AG04449 (cell line): ENCODE measurements at regions of chr3 and their contacts with region 1.

Region 1: DNA sequence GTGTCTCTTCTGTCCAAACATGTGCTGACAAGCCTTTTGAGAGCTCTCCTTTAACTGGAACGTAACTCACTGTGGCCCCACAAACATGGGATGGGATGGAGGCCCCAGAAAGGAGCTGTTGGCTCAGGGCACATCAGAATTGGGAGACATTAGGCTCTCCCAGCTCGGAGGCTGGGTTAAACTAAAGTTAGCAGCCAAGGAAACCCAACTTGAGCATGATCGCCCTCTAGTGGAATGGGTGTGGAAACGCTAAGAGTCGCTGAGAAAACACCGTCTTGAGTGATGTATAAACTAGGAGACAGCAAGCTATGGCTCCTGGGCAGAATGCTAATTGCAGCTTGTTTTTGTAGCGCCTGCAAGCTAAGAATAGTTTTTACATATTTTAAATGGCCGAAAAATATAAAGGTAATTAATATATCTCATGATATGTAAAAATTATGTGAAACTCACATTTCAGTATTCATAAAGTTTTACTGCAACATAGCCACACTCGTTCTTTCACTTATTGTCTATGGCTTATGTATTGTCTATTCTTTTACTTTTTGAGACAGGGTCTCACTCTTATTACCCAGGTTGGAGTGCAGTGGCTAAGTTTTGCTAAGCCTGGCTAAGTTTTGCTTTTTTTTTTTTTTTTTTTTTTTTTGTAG is 138.8 kb upstream of the HACD2 start:
- DNase-seq: no peak
- H3K4me3 ChIP-seq: no peak overlapping the region
- CTCF ChIP-seq: peak; percentile 84

Region 2: DNA sequence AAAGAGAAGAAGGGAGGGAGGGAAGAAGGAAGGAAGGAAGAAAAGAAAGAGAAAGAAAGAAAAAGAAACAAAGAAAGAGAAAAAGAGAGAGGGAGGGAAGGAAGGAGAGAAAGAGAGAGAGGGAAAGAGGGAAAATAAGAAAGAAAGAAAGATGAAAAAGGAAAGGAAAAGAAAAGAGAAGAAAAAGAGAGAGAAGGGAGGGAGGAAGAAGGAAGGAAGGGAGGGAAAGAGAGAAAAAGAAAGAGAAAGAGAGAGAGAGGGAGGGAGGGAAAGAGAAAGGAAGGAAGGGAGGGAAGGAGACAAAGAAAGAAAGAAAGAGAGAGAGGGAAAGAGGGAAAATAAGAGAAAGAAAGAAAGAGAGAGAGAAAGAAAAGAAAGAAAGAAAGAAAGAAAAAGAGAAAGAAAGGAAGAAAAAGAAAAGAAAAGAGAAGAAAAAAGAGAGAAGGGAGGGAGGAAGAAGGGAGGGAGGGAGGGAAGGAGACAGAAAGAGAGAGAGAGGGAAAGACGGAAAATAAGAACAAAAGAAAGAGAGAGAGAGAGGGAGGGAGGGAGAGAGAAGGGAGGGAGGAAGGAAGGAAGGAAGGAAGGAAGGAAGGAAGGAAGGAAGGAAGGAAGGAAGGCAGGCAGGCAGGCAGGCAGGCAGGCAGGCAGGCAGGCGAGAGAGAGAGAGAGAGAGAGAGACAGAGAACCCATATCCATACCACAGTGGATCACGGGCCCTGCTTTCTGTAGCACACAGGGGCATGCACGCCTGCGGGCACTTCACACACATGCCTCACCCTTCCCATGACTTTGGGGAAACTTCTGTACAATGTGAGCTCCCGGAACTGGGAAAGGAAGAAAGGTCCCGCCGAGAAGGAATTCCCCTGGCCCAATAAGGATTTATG is 327.2 kb before region 1 on chr3:
- CTCF ChIA-PET with region 1: no interaction called
- POLR2A ChIA-PET with region 1: no interaction called
- DNase-seq: no peak
- H3K4me3 ChIP-seq: no peak overlapping the region
- CTCF ChIP-seq: no peak

Region 3: GRCh38 chr3:123642182-123642956 is 81.3 kb before region 1 on chr3:
- CTCF ChIA-PET with region 1: interaction called, 512 read pairs
- POLR2A ChIA-PET with region 1: no interaction called
- DNase-seq: peak; percentile 56
- H3K4me3 ChIP-seq: no peak overlapping the region
- CTCF ChIP-seq: peak; percentile 67

Region 4: DNA sequence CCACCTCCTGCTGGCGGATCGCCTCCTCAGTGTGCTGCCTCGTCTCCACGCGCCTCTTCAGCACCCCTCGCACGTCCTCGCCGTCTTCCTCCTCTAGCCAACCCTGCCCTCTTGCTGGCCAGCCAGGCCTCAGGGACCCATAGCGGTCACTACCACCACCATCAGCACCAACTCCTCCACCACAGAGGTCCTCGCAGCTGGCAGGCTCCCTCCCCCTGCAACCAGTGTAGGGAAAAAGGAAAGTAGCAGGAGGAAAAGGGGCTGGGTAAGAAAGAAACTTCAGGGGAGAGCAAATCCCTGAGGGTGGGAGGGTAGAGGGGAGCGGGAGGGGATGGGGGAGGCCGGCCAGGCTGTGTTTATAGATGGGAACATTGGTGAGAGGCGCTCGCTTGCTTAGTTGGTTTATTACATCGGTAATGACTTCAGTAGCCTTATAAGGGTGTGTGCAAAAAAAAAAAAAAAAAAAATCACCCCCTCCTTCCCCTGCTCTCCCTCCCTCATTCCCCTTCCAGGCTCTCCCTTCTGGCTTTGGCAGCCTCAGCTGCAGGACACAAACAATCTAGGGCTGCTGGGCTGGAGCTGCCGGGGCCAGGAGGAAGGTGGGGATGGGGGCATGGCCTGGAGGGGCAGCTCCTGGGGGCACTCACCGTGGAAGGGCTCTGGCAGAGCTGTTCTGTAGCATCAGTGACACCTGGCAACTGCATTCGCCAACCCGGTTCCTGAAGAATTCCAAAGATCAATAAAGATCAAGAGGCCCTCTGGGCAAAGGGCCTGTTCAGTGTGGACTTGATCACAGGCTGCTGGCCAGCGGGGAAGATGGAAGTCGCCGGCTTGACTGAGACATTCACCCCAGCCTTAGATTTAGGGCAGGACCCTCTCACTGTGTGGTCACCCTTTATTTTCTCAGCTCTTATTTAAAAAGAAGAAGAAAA is 22.6 kb before region 1 on chr3:
- CTCF ChIA-PET with region 1: interaction called, 71 read pairs
- POLR2A ChIA-PET with region 1: no interaction called
- DNase-seq: no peak
- H3K4me3 ChIP-seq: no peak overlapping the region
- CTCF ChIP-seq: no peak

Region 5: GRCh38 chr3:123739754-123740153 is 16.1 kb after region 1 on chr3:
- CTCF ChIA-PET with region 1: interaction called, 52 read pairs
- POLR2A ChIA-PET with region 1: no interaction called
- DNase-seq: no peak
- H3K4me3 ChIP-seq: no peak overlapping the region
- CTCF ChIP-seq: no peak

Region 6: GRCh38 chr3:123757281-123757940 is 33.8 kb after region 1 on chr3:
- CTCF ChIA-PET with region 1: interaction called, 32 read pairs
- POLR2A ChIA-PET with region 1: no interaction called
- DNase-seq: no peak
- H3K4me3 ChIP-seq: no peak overlapping the region
- CTCF ChIP-seq: no peak